B cell (primary cell): ENCODE measurements at regions of chr12 and their contacts with region 1.

Region 1: DNA sequence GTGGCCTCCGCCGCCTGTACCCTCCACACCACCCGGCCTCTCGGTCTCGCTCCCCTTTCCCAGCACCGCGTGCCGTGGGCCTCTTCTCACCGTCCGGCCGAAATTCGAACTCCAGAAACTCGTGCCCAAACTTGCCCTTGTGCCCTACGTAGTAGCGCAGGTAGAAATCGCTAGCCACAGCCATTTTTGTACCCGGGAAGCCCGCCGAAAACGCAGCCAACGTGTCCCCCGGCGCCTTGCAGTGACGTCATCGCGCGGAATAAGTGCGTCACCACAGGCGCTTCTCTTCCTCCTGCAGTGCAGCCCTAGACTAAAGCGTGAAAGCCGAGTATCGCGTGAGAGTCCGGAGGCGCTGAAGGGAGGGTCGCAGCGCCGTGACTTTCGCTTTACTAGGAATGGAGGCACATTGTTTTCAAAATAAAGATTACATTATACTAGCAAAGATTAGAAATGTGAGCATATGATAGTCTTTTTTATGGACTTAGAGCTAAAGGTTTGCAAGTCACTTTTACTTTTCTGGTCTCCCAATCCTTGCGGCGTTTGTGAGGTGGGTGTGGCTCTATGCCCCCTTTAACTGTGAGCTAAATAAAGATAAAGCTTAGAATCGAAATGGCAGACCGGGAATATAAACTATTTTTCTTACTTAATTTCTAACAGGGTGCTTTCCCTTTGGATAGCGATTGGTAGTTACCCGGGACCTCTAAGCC is at the start of gene MAGOHB:
- DNase-seq: peak; percentile 98
- ATAC-seq: peak; percentile 96
- H3K4me3 ChIP-seq: peak within 1 kb of the TSS; percentile 71 to 99 (median 88)
- H3K4me3 Mint-ChIP-seq: peak within 1 kb of the TSS; percentile 99
- H3K27ac ChIP-seq: peak within 1 kb of the TSS; percentile 85 to 96
- H3K27ac Mint-ChIP-seq: peak within 1 kb of the TSS; percentile 100
- H3K4me1 ChIP-seq: peaks cover 11 to 19% of the 10 kb centered on the region in 2 donors
- H3K4me1 Mint-ChIP-seq: peaks cover 23% of the 10 kb centered on the region
- H3K27me3 ChIP-seq: no peaks in the 10 kb centered on the region
- H3K27me3 Mint-ChIP-seq: peaks cover 10% of the 10 kb centered on the region
- CTCF ChIP-seq: no peak
- total RNA-seq, gene MAGOHB: 16.0 and 19.1 TPM in 2 replicates

Region 2: DNA sequence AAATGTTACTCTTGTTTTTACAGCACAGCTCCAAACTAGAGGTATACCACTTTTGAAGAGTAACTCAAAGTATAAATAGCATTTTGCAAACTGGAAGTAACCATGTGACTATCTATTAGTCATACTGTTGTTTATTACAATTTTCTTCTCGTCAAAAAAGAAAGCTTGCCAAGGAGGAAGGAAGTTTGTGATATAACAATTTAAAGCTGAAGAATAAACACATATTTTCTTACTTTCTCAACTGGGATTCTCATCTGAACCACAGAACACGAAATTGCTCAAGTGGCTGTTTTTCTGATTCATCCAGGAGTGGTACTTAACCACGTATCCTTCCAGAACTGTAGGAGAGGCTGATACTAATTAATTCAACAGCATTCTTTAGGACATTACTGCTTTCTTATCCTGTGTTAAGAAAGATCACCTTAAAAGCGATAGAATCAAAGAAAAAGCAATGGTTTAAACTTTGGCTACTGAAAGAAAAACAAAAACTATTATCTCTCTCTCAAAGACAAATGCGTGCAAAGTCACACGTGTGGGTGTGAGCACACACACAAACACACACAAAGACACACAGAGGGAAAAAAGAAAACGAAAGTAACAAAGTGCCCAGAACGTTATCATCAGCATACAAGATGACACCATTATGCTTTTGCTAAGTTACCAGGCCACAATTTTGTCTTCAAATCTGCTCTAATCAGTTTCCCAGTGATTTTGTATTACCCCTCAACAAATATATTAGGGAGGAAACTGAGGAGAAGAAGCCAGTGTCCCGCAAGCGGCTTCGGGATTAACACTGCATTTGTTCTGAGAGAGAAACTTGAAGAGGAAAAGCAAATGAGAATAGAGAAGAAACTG is 744.0 kb before region 1 on chr12 and contains the start of gene CLEC2B:
- CTCF ChIA-PET with region 1: no interaction called
- POLR2A ChIA-PET with region 1: no interaction called
- intact Hi-C with region 1: loop called (anchors 5 kb)
- DNase-seq: peak; percentile 76
- ATAC-seq: peak; percentile 66
- H3K4me3 ChIP-seq: peak within 1 kb of the TSS; percentile 51 to 97 (median 66)
- H3K4me3 Mint-ChIP-seq: peak within 1 kb of the TSS; percentile 92
- H3K27ac ChIP-seq: peak within 1 kb of the TSS; percentile 89 to 90
- H3K27ac Mint-ChIP-seq: peak within 1 kb of the TSS; percentile 99
- H3K4me1 ChIP-seq: peaks cover 14 to 18% of the 10 kb centered on the region in 2 donors
- H3K4me1 Mint-ChIP-seq: peaks cover 41% of the 10 kb centered on the region
- H3K27me3 ChIP-seq: no peaks in the 10 kb centered on the region
- H3K27me3 Mint-ChIP-seq: no peaks in the 10 kb centered on the region
- CTCF ChIP-seq: no peak
- total RNA-seq, gene CLEC2B: 30.5 and 31.6 TPM in 2 replicates

Region 3: DNA sequence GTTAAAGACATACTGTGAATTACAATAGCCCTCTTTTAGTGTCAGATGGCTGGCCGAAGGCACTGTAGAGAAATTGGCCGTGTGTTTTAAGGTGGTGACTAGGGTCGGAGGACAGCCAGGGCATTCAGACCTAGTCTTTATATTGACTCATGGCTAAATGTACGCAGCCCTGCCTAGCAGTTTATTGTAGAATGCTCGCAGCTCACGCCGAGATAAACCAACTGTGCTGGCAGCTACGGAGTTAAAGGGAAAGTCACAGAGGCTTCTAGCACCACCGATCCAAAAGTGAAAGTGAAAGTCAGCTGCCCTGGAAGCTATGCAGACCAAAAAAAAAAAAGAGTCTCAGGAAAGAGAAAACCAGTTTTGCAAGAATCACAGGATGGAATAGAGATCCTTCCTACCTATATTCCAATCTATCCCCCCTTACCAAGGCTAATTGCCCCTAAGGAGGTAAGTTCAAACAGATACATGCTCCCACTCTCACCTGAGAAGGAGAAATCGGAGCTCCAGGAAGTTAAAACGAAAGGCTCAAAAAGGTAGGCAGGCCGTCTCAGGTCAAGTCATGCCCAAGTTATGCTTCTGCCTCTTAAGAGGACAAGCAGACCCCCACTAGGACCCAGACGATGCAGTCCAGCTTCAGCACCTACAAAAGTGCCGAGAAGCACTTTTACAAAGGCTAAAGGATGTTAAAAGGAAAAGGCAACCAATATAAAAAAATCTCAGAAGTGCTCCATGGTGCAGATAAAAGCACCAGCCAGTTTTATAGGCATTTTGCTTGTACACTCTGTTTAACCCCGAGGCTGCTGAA is 248.5 kb before region 1 on chr12:
- CTCF ChIA-PET with region 1: no interaction called
- POLR2A ChIA-PET with region 1: interaction called, 3 read pairs
- intact Hi-C with region 1: loop called (anchors 1 kb)
- DNase-seq: peak; percentile 87
- ATAC-seq: peak; percentile 73
- H3K4me3 ChIP-seq: peak overlapping the region; percentile 72 to 98 (median 95)
- H3K4me3 Mint-ChIP-seq: no peak overlapping the region
- H3K27ac ChIP-seq: peak overlapping the region; percentile 91 to 93
- H3K27ac Mint-ChIP-seq: no peak overlapping the region
- H3K4me1 ChIP-seq: peaks cover 32 to 46% of the 10 kb centered on the region in 2 donors
- H3K4me1 Mint-ChIP-seq: peaks cover 2% of the 10 kb centered on the region
- H3K27me3 ChIP-seq: no peaks in the 10 kb centered on the region
- H3K27me3 Mint-ChIP-seq: no peaks in the 10 kb centered on the region
- CTCF ChIP-seq: no peak

Region 4: GRCh38 chr12:10636611-10637010 is 23.1 kb after region 1 on chr12:
- CTCF ChIA-PET with region 1: no interaction called
- POLR2A ChIA-PET with region 1: no interaction called
- intact Hi-C with region 1: no loop called
- DNase-seq: no peak
- ATAC-seq: no peak
- H3K4me3 ChIP-seq: no peak overlapping the region
- H3K4me3 Mint-ChIP-seq: no peak overlapping the region
- H3K27ac ChIP-seq: no peak overlapping the region
- H3K27ac Mint-ChIP-seq: no peak overlapping the region
- H3K4me1 ChIP-seq: no peaks in the 10 kb centered on the region
- H3K4me1 Mint-ChIP-seq: no peaks in the 10 kb centered on the region
- H3K27me3 ChIP-seq: peaks cover 0 to 9% (median 0%) of the 10 kb centered on the region in 4 experiments
- H3K27me3 Mint-ChIP-seq: peaks cover 21% of the 10 kb centered on the region
- CTCF ChIP-seq: no peak

Region 5: GRCh38 chr12:10721651-10722501 is 108.4 kb after region 1 on chr12:
- CTCF ChIA-PET with region 1: no interaction called
- POLR2A ChIA-PET with region 1: no interaction called
- intact Hi-C with region 1: loop called (anchors 1 kb)
- DNase-seq: peak; percentile 93
- ATAC-seq: peak; percentile 48
- H3K4me3 ChIP-seq: peak overlapping the region; percentile 80 to 92 (median 89)
- H3K4me3 Mint-ChIP-seq: peak overlapping the region; percentile 89
- H3K27ac ChIP-seq: peak overlapping the region; percentile 97 to 98
- H3K27ac Mint-ChIP-seq: peak overlapping the region; percentile 89
- H3K4me1 ChIP-seq: peaks cover 20 to 29% of the 10 kb centered on the region in 2 donors
- H3K4me1 Mint-ChIP-seq: peaks cover 31% of the 10 kb centered on the region
- H3K27me3 ChIP-seq: no peaks in the 10 kb centered on the region
- H3K27me3 Mint-ChIP-seq: peaks cover 32% of the 10 kb centered on the region
- CTCF ChIP-seq: no peak

Region 6: DNA sequence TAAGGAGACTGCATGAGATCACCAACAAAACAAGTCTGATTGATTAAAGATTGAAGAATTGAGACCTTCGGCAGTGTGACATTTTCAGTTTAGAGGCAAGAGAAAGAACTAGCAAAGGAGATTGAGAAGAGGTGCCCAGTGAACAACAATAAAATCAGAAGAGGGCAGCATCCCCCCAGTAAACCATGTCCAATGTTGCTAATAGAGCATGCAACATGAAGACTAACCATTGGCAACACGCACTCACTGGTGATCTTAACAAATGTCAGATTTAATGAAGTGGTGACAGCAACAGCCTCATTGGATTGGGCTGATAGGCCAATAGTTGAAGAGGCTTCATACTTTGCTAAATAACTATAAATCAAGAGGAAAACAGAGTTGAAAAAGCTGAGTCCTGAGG is 346.3 kb after region 1 on chr12:
- CTCF ChIA-PET with region 1: no interaction called
- POLR2A ChIA-PET with region 1: no interaction called
- intact Hi-C with region 1: no loop called
- DNase-seq: no peak
- ATAC-seq: no peak
- H3K4me3 ChIP-seq: no peak overlapping the region
- H3K4me3 Mint-ChIP-seq: no peak overlapping the region
- H3K27ac ChIP-seq: no peak overlapping the region
- H3K27ac Mint-ChIP-seq: no peak overlapping the region
- H3K4me1 ChIP-seq: peaks cover 11 to 12% of the 10 kb centered on the region in 2 donors
- H3K4me1 Mint-ChIP-seq: peaks cover 19% of the 10 kb centered on the region
- H3K27me3 ChIP-seq: no peaks in the 10 kb centered on the region
- H3K27me3 Mint-ChIP-seq: no peaks in the 10 kb centered on the region
- CTCF ChIP-seq: no peak

Region 7: DNA sequence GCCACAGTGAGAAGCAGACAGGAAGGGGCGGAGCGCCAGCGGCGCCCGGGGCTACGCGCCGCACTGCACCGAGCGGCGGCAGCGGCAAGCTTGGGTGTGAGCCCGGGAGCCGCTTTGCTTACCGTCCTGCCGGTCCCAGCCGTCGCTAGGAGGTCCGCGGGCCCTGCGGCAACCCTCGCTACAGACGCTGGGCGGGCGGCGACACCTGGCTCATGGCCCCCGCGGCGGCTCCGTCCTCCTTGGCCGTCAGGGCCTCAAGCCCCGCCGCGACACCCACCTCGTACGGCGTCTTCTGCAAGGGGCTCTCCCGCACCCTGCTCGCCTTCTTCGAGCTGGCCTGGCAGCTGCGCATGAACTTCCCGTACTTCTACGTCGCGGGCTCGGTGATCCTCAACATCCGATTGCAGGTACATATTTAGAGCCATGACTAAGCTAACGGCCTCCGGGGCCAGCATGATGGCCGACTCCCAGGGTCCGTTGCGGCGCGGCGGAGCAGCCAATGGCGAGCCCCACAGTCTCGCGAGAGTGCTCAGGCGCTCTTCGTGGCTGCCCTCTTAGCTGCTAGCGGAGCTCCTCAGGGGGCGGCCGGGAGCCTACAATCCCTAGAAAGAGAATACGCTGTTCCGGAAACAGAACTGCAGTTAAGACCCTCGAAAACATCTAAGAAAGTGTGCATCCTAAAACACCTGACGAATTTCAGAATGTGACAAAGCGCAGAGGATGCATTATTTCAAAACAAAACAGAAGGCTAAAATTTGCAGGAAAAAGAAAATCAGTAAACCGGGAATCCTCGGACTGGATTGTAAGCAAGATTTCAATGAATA is 557.9 kb after region 1 on chr12 and contains the start of gene SMIM10L1:
- CTCF ChIA-PET with region 1: no interaction called
- POLR2A ChIA-PET with region 1: no interaction called
- intact Hi-C with region 1: loop called (anchors 1 kb)
- DNase-seq: peak; percentile 93
- ATAC-seq: peak; percentile 95
- H3K4me3 ChIP-seq: peak within 1 kb of the TSS; percentile 43 to 75 (median 61)
- H3K4me3 Mint-ChIP-seq: peak within 1 kb of the TSS; percentile 99
- H3K27ac ChIP-seq: peak within 1 kb of the TSS; percentile 53 to 71
- H3K27ac Mint-ChIP-seq: peak within 1 kb of the TSS; percentile 97
- H3K4me1 ChIP-seq: peaks cover 22 to 25% of the 10 kb centered on the region in 2 donors
- H3K4me1 Mint-ChIP-seq: peaks cover 44% of the 10 kb centered on the region
- H3K27me3 ChIP-seq: no peaks in the 10 kb centered on the region
- H3K27me3 Mint-ChIP-seq: no peaks in the 10 kb centered on the region
- CTCF ChIP-seq: no peak
- total RNA-seq, gene SMIM10L1: 9.6 and 10.1 TPM in 2 replicates